ENCODE measurements at regions of chr2 and their contacts with region 1.

Region 1: GRCh38 chr2:158745044-158745865 is 49.9 kb upstream of the DAPL1 start:
- DNase-seq: peak; percentile 58
- H3K4me3 ChIP-seq: no peak overlapping the region
- H3K27ac ChIP-seq: no peak overlapping the region
- H3K4me1 ChIP-seq: peaks cover 0 to 12% of the 10 kb centered on the region in 2 experiments; a peak in 1 of 4 replicates
- H3K27me3 ChIP-seq: no peaks in the 10 kb centered on the region
- CTCF ChIP-seq: peak; percentile 72
- EP300 ChIP-seq: no peak
- RAD21 ChIP-seq: peak; percentile 92

Region 2: DNA sequence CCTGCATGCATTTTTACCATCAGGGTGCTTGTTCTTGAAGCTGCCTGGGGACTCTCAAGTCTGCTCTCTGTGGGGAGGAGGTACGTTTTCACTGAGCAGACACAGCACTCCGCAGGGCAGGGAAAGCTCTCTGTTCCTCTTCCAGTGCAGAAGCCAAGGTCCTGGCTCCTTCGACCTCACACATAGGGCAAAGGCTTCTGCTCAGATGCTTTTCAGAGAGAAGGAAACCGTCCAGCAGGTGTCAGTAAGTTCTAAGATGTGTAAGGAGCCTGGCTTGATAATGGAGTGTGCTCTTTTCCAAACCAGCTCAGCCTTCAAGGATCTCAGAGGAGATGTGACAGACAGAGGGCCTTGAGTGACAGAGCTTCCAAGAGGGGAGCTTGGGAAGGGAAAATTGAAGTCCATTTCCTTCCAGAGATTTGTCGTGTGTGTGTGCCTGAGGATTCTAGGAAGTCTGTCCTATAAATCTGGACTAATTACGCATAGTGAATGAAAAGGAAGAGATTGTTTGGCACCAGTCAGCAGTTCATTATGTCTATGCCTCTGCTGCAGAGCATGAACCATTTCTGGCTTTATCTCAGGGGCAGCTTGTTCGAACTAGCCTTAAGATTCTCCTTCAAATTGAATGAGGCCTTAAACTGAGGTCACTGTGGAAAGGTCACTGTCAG is 710.9 kb before region 1 on chr2:
- CTCF ChIA-PET with region 1: interaction called, 105 read pairs
- POLR2A ChIA-PET with region 1: no interaction called
- DNase-seq: peak; percentile 39
- H3K4me3 ChIP-seq: no peak overlapping the region
- H3K27ac ChIP-seq: no peak overlapping the region
- H3K4me1 ChIP-seq: peaks cover 0 to 5% of the 10 kb centered on the region in 2 experiments; a peak in 1 of 4 replicates
- H3K27me3 ChIP-seq: no peaks in the 10 kb centered on the region
- CTCF ChIP-seq: peak; percentile 53
- EP300 ChIP-seq: no peak
- RAD21 ChIP-seq: peak; percentile 80

Region 3: GRCh38 chr2:158179660-158180059 is 565.6 kb before region 1 on chr2:
- CTCF ChIA-PET with region 1: interaction called, 68 read pairs
- POLR2A ChIA-PET with region 1: interaction called, 3 read pairs
- DNase-seq: no peak
- H3K4me3 ChIP-seq: no peak overlapping the region
- H3K27ac ChIP-seq: no peak overlapping the region
- H3K4me1 ChIP-seq: peaks cover 0 to 2% of the 10 kb centered on the region in 2 experiments; a peak in 2 of 4 replicates
- H3K27me3 ChIP-seq: no peaks in the 10 kb centered on the region
- CTCF ChIP-seq: peak; percentile 47
- EP300 ChIP-seq: no peak
- RAD21 ChIP-seq: peak; percentile 79

Region 4: GRCh38 chr2:158656492-158657229 is 88.6 kb before region 1 on chr2:
- CTCF ChIA-PET with region 1: interaction called, 10 read pairs
- POLR2A ChIA-PET with region 1: no interaction called
- DNase-seq: no peak
- H3K4me3 ChIP-seq: no peak overlapping the region
- H3K27ac ChIP-seq: no peak overlapping the region
- H3K4me1 ChIP-seq: peaks cover 0 to 10% of the 10 kb centered on the region in 2 experiments; a peak in 1 of 4 replicates
- H3K27me3 ChIP-seq: no peaks in the 10 kb centered on the region
- CTCF ChIP-seq: no peak
- EP300 ChIP-seq: no peak
- RAD21 ChIP-seq: no peak

Region 5: DNA sequence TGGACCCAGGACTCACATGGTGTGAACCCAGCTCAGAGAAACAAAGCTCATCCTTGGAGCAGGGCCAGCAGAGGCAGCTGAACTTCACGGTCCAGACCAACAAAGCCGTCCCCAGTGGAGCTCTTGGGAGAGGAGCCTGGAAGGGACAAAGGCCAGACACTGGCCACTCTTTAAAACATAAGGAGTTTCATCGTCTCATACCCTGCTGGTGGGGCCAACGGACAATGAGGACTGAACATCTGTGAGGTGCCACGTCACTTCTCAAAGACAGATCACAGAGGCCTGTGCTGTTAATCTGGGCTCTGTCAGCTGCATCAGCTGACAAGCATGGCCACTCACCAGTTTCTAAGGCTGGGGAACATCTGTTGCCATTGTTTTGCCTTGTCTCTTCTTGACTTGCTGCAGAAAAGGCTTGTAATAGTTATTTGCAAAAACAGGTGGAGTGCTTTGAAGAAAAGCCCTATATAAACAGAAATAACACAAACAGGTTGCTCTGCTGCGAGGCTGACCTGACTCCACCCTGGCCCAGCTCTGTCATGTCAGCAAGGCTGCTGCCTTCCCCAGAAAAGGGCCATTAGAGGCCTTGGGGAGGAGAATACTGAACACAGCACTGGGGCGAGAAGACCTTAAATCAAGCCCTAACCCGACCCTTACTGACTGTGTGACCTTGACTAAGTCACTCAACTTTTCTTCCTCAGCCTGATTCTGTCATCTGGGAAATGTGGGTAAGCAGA is 18.2 kb before region 1 on chr2:
- CTCF ChIA-PET with region 1: interaction called, 12 read pairs
- POLR2A ChIA-PET with region 1: no interaction called
- DNase-seq: peak; percentile 39
- H3K4me3 ChIP-seq: no peak overlapping the region
- H3K27ac ChIP-seq: no peak overlapping the region
- H3K4me1 ChIP-seq: peaks cover 0 to 9% of the 10 kb centered on the region in 2 experiments; a peak in 1 of 4 replicates
- H3K27me3 ChIP-seq: no peaks in the 10 kb centered on the region; the same call in 1 of the 2 replicates
- CTCF ChIP-seq: no peak
- EP300 ChIP-seq: no peak
- RAD21 ChIP-seq: no peak

Region 6: GRCh38 chr2:158761621-158762020 is 16.4 kb after region 1 on chr2:
- CTCF ChIA-PET with region 1: interaction called, 74 read pairs
- POLR2A ChIA-PET with region 1: no interaction called
- DNase-seq: no peak
- H3K4me3 ChIP-seq: no peak overlapping the region
- H3K27ac ChIP-seq: no peak overlapping the region
- H3K4me1 ChIP-seq: no peaks in the 10 kb centered on the region
- H3K27me3 ChIP-seq: no peaks in the 10 kb centered on the region
- CTCF ChIP-seq: no peak
- EP300 ChIP-seq: no peak
- RAD21 ChIP-seq: no peak

Region 7: GRCh38 chr2:159053161-159054031 is 308.1 kb after region 1 on chr2:
- CTCF ChIA-PET with region 1: no interaction called
- POLR2A ChIA-PET with region 1: no interaction called
- DNase-seq: peak; percentile 44
- H3K4me3 ChIP-seq: no peak overlapping the region
- H3K27ac ChIP-seq: peak overlapping the region; percentile 94 to 99
- H3K4me1 ChIP-seq: peaks cover 0 to 76% of the 10 kb centered on the region in 2 experiments; a peak in 2 of 4 replicates
- H3K27me3 ChIP-seq: no peaks in the 10 kb centered on the region
- CTCF ChIP-seq: no peak
- EP300 ChIP-seq: peak; percentile 43 to 90; a peak in 3 of 4 replicates
- RAD21 ChIP-seq: peak; percentile 22; the same call in 1 of the 2 replicates